ENCODE measurements at regions of chr5 and their contacts with region 1.

Region 1: GRCh38 chr5:10452768-10453331 is 11.2 kb downstream of the ROPN1L start:
- DNase-seq: no peak
- H3K4me3 ChIP-seq: no peak overlapping the region
- H3K27ac ChIP-seq: no peak overlapping the region
- H3K4me1 ChIP-seq: peaks cover 0 to 11% (median 9%) of the 10 kb centered on the region in 4 donors
- H3K27me3 ChIP-seq: peaks cover 0 to 8% (median 0%) of the 10 kb centered on the region in 4 donors
- CTCF ChIP-seq: peak; percentile 47 to 62 (median 50)
- EP300 ChIP-seq: no peak
- POLR2A ChIP-seq: no peak

Region 2: DNA sequence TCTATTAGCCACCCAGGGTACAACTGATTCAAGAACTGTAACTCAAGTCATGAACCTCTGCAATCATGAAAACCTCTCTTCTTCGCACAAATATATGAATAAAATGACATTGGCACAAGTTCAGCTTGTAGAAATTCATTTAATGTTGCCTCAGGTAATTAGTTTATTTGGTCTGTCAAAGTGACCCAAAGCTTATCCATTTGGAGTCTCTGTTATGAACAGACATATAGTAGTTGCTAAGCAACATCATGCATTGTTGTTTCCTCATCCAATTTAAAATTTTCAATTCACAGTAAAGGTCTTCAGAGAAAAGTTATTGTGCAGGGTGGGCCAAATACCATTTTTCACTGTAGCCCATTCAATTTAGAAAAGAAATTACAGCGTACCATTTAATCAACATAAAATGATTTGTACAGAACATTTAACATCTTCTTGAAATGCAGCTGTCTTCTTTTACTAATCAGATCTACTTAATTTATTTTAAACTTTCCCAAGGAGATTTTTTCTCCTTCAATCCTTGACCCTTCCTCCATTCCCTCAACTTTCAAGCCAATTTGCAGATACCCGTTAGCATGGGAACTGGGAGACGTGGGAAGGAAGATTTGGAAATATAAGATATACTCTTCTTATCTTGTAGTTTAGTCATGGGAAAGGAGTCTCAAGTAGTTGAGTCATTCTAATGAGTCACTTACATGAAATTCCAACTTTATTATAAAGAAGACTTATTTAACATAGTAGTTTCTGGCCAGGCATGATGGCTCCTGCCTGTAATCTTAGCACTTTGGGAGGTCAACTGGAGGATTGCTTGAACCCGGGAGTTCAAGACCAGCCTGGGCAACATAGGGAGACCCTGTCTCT is 434.4 kb before region 1 on chr5:
- intact Hi-C with region 1: no loop called
- DNase-seq: no peak
- H3K4me3 ChIP-seq: no peak overlapping the region
- H3K27ac ChIP-seq: no peak overlapping the region
- H3K4me1 ChIP-seq: no peaks in the 10 kb centered on the region
- H3K27me3 ChIP-seq: no peaks in the 10 kb centered on the region
- CTCF ChIP-seq: no peak
- EP300 ChIP-seq: no peak
- POLR2A ChIP-seq: no peak

Region 3: DNA sequence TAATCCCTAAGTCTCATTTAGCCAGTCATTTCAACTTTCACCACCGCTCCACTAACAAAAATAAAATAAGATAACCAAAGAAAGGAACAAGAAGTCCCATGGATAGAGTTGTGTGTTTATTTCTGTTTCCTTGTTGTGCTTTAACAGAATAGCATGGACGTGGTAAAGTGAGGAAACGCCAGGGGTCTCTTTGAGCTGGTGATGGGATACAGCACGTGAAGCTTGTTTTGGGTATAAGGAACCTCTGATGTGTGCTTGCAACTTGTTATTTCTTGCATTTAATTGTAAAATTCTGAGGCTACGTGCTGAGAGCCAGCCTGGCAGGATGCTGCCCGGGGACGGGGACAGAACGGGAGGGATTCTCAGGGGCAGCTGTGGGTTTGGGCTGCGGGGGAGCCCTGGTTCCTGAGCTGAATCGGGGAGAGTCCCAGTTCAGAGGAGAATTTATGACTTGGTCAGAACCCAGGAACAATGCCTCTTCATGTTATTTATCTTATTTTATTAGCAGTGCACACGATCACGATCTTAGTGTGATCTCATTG is 174.4 kb after region 1 on chr5:
- intact Hi-C with region 1: loop called (anchors 2 kb)
- DNase-seq: no peak
- H3K4me3 ChIP-seq: peak overlapping the region; percentile 34 to 47 (median 44)
- H3K27ac ChIP-seq: peak overlapping the region; percentile 49 to 78 (median 58)
- H3K4me1 ChIP-seq: peaks cover 16 to 22% (median 20%) of the 10 kb centered on the region in 4 donors
- H3K27me3 ChIP-seq: peaks cover 0 to 36% (median 0%) of the 10 kb centered on the region in 4 donors
- CTCF ChIP-seq: no peak
- EP300 ChIP-seq: no peak
- POLR2A ChIP-seq: no peak